Transverse colon (tissue), 4 donors: ENCODE measurements at regions of chr10 and their contacts with region 1.

Region 1: GRCh38 chr10:48707472-48707871 is 22.8 kb downstream of the WDFY4 start:
- DNase-seq: no peak
- H3K4me3 ChIP-seq: no peak overlapping the region
- H3K27ac ChIP-seq: no peak overlapping the region
- H3K4me1 ChIP-seq: peaks cover 0 to 13% (median 0%) of the 10 kb centered on the region in 4 donors
- H3K27me3 ChIP-seq: no peaks in the 10 kb centered on the region
- CTCF ChIP-seq: no peak
- EP300 ChIP-seq: no peak
- POLR2A ChIP-seq: no peak

Region 2: DNA sequence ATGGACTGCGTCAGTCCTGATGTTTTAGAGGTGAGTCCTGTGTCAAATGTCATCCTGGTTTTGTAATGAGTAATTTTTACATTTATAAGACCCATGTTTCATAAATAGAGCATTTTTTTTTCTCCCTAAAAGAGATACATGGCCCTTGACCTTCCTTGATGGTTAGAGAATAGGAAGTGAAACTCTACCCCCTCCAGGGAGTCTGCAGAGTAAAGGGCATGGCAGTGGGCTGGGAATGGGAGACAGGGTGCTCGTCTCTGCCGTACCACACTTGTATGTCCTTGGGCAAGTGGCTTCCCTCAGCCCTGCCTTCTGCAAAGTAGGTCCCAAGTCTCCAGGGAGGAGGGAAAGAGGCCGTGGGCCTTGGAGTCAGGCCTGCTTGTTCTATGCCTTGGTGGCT is 41.1 kb after region 1 on chr10:
- in situ Hi-C with region 1: no loop called
- intact Hi-C with region 1: loop called (anchors 2 kb)
- DNase-seq: no peak
- H3K4me3 ChIP-seq: no peak overlapping the region
- H3K27ac ChIP-seq: no peak overlapping the region
- H3K4me1 ChIP-seq: no peaks in the 10 kb centered on the region
- H3K27me3 ChIP-seq: no peaks in the 10 kb centered on the region
- CTCF ChIP-seq: no peak
- EP300 ChIP-seq: no peak
- POLR2A ChIP-seq: no peak

Region 3: DNA sequence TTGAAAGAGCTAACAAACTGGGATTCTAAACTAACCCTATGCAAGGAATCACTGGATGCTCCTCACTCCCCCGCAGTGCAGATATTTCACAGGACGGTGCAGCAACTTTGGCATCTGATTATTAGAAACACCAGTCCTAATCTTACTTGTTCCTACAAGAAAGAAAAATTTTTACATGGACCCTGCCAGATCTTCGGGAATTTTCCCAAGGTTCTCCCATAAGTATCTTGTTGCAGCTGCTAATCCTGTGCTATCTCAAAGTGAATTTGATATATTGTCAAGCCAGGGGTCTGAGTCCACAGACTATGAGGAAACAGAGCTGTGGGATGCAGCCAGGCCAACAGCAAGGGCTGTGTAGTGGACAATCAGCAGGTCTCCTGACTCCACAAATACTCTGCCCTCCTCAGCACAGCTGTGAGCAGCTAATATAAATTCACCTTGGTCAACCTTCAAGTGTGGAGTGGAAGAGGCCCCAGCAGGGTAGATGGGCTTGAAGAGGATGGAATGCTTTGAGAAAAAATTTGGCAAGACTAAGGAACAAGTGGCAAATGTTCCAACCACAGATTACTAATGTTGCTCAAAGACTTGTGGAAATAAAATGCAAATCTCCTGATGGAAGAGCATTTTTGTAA is 382.2 kb after region 1 on chr10:
- in situ Hi-C with region 1: no loop called
- intact Hi-C with region 1: no loop called
- DNase-seq: no peak
- H3K4me3 ChIP-seq: no peak overlapping the region
- H3K27ac ChIP-seq: no peak overlapping the region
- H3K4me1 ChIP-seq: peaks cover 0 to 8% (median 3%) of the 10 kb centered on the region in 4 donors
- H3K27me3 ChIP-seq: no peaks in the 10 kb centered on the region
- CTCF ChIP-seq: no peak
- EP300 ChIP-seq: no peak
- POLR2A ChIP-seq: no peak